Endothelial cell of umbilical vein (primary cell): ENCODE measurements at regions of chr17 and their contacts with region 1.

Region 1: GRCh38 chr17:57243171-57243948 is 13.0 kb upstream of the MSI2 start:
- DNase-seq: peak; percentile 66
- H3K4me3 ChIP-seq: no peak overlapping the region
- H3K27ac ChIP-seq: no peak overlapping the region
- H3K4me1 ChIP-seq: no peaks in the 10 kb centered on the region
- H3K27me3 ChIP-seq: peaks cover 13 to 16% of the 10 kb centered on the region in 2 experiments
- CTCF ChIP-seq: peak; percentile 100
- POLR2A ChIP-seq: no peak

Region 2: GRCh38 chr17:56715613-56716357 is 527.6 kb before region 1 on chr17:
- CTCF ChIA-PET with region 1: no interaction called
- POLR2A ChIA-PET with region 1: no interaction called
- dilution Hi-C with region 1: no loop called
- intact Hi-C with region 1: no loop called
- DNase-seq: peak; percentile 74
- H3K4me3 ChIP-seq: no peak overlapping the region
- H3K27ac ChIP-seq: no peak overlapping the region
- H3K4me1 ChIP-seq: no peaks in the 10 kb centered on the region
- H3K27me3 ChIP-seq: peaks cover 0 to 2% of the 10 kb centered on the region in 2 experiments
- CTCF ChIP-seq: peak; percentile 75 to 80
- POLR2A ChIP-seq: no peak

Region 3: DNA sequence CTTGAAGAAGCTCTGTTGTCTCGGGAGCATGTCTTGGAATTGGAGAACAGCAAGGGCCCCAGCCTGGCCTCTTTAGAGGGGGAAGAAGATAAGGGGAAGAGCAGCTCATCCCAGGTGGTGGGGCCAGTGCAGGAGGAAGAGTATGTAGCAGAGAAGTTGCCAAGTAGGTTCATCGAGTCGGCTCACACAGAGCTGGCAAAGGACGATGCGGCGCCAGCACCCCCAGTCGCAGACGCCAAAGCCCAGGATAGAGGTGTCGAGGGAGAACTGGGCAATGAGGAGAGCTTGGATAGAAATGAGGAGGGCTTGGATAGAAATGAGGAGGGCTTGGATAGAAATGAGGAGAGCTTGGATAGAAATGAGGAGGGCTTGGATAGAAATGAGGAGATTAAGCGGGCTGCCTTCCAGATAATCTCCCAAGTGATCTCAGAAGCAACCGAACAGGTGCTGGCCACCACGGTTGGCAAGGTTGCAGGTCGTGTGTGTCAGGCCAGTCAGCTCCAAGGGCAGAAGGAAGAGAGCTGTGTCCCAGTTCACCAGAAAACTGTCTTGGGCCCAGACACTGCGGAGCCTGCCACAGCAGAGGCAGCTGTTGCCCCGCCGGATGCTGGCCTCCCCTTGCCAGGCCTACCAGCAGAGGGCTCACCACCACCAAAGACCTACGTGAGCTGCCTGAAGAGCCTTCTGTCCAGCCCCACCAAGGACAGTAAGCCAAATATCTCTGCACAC is 137.1 kb before region 1 on chr17:
- CTCF ChIA-PET with region 1: no interaction called
- POLR2A ChIA-PET with region 1: no interaction called
- dilution Hi-C with region 1: no loop called
- intact Hi-C with region 1: no loop called
- DNase-seq: no peak
- H3K4me3 ChIP-seq: no peak overlapping the region
- H3K27ac ChIP-seq: no peak overlapping the region
- H3K4me1 ChIP-seq: no peaks in the 10 kb centered on the region
- H3K27me3 ChIP-seq: no peaks in the 10 kb centered on the region
- CTCF ChIP-seq: peak in 1 of 2 donors; percentile 38
- POLR2A ChIP-seq: no peak

Region 4: GRCh38 chr17:57120814-57121213 is 122.5 kb before region 1 on chr17:
- CTCF ChIA-PET with region 1: no interaction called
- POLR2A ChIA-PET with region 1: no interaction called
- dilution Hi-C with region 1: no loop called
- intact Hi-C with region 1: no loop called
- DNase-seq: no peak
- H3K4me3 ChIP-seq: no peak overlapping the region
- H3K27ac ChIP-seq: no peak overlapping the region
- H3K4me1 ChIP-seq: no peaks in the 10 kb centered on the region
- H3K27me3 ChIP-seq: no peaks in the 10 kb centered on the region
- CTCF ChIP-seq: no peak
- POLR2A ChIP-seq: no peak

Region 5: DNA sequence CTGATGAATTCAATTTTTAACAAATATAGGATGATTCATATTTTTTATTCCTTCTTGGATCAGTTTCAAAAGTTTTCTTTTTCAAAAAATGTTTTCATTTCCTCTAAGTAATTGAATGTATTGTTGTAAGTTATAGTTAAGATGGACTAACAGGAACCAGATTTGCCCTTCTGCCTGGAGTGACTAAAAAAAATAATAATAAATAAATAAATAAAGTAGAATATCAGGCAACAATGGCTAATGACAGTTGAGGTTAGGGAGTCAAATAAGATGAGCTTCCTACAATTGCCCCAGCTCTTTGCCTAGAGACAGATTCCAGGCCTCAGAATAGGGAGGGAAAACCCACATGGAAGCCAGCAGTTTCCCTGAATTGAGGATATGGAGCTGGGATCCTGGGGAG is 60.7 kb before region 1 on chr17:
- CTCF ChIA-PET with region 1: interaction called, 19 read pairs
- POLR2A ChIA-PET with region 1: no interaction called
- dilution Hi-C with region 1: no loop called
- intact Hi-C with region 1: no loop called
- DNase-seq: peak; percentile 44
- H3K4me3 ChIP-seq: no peak overlapping the region
- H3K27ac ChIP-seq: no peak overlapping the region
- H3K4me1 ChIP-seq: peaks cover 5% of the 10 kb centered on the region
- H3K27me3 ChIP-seq: no peaks in the 10 kb centered on the region
- CTCF ChIP-seq: no peak
- POLR2A ChIP-seq: no peak

Region 6: DNA sequence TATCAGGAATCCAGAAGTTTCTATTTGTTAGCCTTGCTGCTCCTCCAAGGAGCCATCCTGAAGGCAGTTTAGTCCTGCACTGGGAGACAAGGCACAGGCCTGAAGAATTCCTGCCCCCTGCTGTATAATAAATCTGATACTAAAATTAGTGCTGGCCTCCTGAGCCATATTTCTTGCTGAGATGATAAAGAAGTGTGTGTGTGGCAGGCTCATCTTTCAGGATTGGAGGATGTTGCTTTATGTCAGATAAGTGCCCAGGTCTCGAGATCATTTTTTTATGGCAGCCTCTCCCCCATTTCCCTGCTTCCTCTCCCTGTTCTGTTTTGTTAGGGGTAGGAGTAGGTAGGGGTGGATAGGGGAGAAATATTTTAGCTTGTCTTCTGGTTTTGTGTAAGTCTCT is 38.9 kb after region 1 on chr17:
- CTCF ChIA-PET with region 1: interaction called, 22 read pairs
- POLR2A ChIA-PET with region 1: no interaction called
- dilution Hi-C with region 1: no loop called
- intact Hi-C with region 1: no loop called
- DNase-seq: no peak
- H3K4me3 ChIP-seq: no peak overlapping the region
- H3K27ac ChIP-seq: no peak overlapping the region
- H3K4me1 ChIP-seq: no peaks in the 10 kb centered on the region
- H3K27me3 ChIP-seq: no peaks in the 10 kb centered on the region
- CTCF ChIP-seq: no peak
- POLR2A ChIP-seq: no peak

Region 7: GRCh38 chr17:57323391-57323790 is 80.0 kb after region 1 on chr17:
- CTCF ChIA-PET with region 1: no interaction called
- POLR2A ChIA-PET with region 1: no interaction called
- dilution Hi-C with region 1: no loop called
- intact Hi-C with region 1: no loop called
- DNase-seq: no peak
- H3K4me3 ChIP-seq: no peak overlapping the region
- H3K27ac ChIP-seq: no peak overlapping the region
- H3K4me1 ChIP-seq: no peaks in the 10 kb centered on the region
- H3K27me3 ChIP-seq: no peaks in the 10 kb centered on the region
- CTCF ChIP-seq: no peak
- POLR2A ChIP-seq: no peak

Region 8: DNA sequence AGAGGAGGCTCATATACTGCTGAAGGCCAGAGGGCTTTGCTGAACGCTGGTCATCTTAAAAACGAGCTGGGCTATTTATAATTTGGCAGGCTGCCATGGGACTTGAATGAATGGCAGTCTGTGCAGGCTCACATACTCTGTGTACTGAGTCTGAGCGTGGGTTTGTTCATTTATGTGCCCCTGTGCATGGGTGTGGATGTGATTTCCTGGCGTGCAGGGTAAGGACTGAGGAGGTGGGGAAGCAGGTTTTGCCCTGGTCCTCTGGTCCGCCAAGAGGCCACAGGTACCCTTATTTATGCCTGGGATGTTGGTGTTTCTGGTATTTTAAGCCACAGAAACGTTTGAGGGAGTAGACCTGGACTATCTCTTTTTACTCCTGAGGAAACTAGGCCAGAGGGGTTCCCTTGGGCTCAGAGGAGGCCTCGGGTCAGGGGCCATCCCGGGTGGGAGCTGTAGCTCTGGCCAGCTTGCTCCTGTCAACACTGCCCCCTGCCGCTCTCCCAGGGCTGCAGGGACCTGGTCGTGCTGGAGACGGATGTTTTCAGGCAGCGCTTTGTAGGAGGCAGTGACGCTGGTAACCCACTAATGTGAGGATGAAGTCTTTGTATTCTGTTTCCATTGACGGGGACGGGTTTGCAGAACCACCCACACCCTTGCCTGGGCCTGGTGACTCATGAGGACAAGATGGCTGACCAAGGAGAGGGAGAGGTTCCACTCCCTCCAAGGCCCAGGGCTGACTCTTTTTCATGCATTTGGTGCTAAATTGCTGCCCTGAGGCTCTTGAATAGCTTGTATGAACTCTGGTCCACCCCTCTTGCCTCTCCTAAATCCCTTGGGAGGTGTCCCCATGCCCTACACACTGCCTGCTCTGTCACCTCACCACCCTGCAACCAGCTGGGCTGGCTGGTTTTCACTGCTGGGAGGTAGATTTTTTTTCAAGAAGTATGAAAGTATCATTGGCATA is 197.4 kb after region 1 on chr17:
- CTCF ChIA-PET with region 1: interaction called, 63 read pairs
- POLR2A ChIA-PET with region 1: no interaction called
- dilution Hi-C with region 1: no loop called
- intact Hi-C with region 1: loop called (anchors 1 kb)
- DNase-seq: peak; percentile 55
- H3K4me3 ChIP-seq: no peak overlapping the region
- H3K27ac ChIP-seq: no peak overlapping the region
- H3K4me1 ChIP-seq: peaks cover 21% of the 10 kb centered on the region
- H3K27me3 ChIP-seq: no peaks in the 10 kb centered on the region
- CTCF ChIP-seq: peak; percentile 43 to 58
- POLR2A ChIP-seq: no peak

Region 9: DNA sequence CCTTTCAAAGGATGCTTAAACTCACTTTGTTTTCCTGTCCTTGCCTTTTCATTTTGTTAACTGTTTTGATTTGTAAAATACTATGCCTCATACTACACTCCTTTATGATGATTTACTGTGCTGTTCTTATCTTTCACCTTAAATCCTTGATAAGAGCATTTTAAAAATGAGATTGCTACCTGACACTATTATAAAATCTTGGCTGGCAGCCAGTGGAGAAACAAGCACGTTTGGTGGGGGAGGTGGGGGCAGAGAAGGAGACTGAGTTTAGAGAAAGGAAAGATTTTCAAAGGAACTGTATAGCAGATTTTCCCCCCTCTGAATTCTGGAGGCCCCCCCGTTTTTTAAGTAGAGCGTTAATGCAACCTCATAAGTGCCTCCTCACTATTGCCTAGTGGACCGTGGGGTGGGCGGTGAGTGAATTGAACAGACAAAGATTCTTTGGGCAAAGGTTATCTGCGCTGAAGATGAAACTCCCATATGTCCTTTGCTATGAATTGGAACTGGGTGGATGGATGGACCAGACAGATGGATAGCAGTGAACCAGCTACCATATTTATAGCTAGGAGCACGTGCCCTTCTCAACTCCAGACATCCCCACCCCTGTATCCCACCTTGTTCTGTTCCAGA is 301.6 kb after region 1 on chr17:
- CTCF ChIA-PET with region 1: interaction called, 12 read pairs
- POLR2A ChIA-PET with region 1: no interaction called
- dilution Hi-C with region 1: no loop called
- intact Hi-C with region 1: no loop called
- DNase-seq: no peak
- H3K4me3 ChIP-seq: no peak overlapping the region
- H3K27ac ChIP-seq: no peak overlapping the region
- H3K4me1 ChIP-seq: peaks cover 3% of the 10 kb centered on the region
- H3K27me3 ChIP-seq: no peaks in the 10 kb centered on the region
- CTCF ChIP-seq: no peak
- POLR2A ChIP-seq: no peak

Region 10: GRCh38 chr17:57662644-57663308 is 419.4 kb after region 1 on chr17:
- CTCF ChIA-PET with region 1: interaction called, 11 read pairs
- POLR2A ChIA-PET with region 1: no interaction called
- dilution Hi-C with region 1: no loop called
- intact Hi-C with region 1: no loop called
- DNase-seq: peak; percentile 98
- H3K4me3 ChIP-seq: peak overlapping the region in 2 of 3 experiments; percentile 5 to 32
- H3K27ac ChIP-seq: peak overlapping the region; percentile 87
- H3K4me1 ChIP-seq: peaks cover 13% of the 10 kb centered on the region
- H3K27me3 ChIP-seq: no peaks in the 10 kb centered on the region
- CTCF ChIP-seq: no peak
- POLR2A ChIP-seq: no peak

Region 11: GRCh38 chr17:57833179-57833939 is 590.0 kb after region 1 on chr17:
- CTCF ChIA-PET with region 1: interaction called, 63 read pairs
- POLR2A ChIA-PET with region 1: no interaction called
- dilution Hi-C with region 1: no loop called
- intact Hi-C with region 1: loop called (anchors 1 kb)
- DNase-seq: peak; percentile 72
- H3K4me3 ChIP-seq: peak overlapping the region in 2 of 3 experiments; percentile 23 to 54
- H3K27ac ChIP-seq: no peak overlapping the region
- H3K4me1 ChIP-seq: no peaks in the 10 kb centered on the region
- H3K27me3 ChIP-seq: no peaks in the 10 kb centered on the region
- CTCF ChIP-seq: peak; percentile 83 to 96
- POLR2A ChIP-seq: no peak